Mucosa of descending colon (tissue), 3 donors: ENCODE measurements at regions of chr6 and their contacts with region 1.

Region 1: DNA sequence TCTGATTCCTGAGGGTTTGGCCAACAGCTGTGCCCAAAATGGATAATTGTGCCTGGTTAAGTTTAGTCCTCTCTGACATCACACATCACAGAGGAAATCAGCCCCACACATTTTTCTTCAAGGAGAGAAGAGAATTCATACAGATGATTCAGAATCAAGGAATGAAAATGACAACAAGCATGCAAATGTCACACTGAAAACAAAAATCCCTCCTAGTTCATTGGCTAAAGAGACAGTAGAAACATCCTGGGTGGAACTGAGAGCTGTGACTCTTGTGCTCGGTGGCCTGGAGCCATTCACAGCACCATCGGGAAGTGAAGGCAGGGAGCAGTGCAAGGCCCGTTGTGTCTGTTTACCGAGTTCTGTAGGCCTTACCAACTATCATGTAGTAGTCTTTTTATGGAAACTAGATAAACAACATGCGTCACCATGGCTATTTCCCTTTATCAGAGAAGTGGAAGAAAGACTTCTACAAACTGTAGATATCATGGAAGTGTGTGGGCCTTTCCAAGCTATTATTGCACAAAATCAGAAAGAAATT is 81.7 kb upstream of the TENT5A start:
- DNase-seq: peak; percentile 53 to 57 (median 55)
- ATAC-seq: peak; percentile 78
- H3K4me3 ChIP-seq: no peak overlapping the region
- H3K4me1 ChIP-seq: peaks cover 34% of the 10 kb centered on the region
- CTCF ChIP-seq: no peak

Region 2: GRCh38 chr6:81787313-81788068 is 46.7 kb before region 1 on chr6:
- intact Hi-C with region 1: loop called in 1 of 2 experiments (anchors 10 kb)
- DNase-seq: no peak
- ATAC-seq: peak; percentile 46
- H3K4me3 ChIP-seq: no peak overlapping the region
- H3K4me1 ChIP-seq: peaks cover 12% of the 10 kb centered on the region
- CTCF ChIP-seq: no peak

Region 3: DNA sequence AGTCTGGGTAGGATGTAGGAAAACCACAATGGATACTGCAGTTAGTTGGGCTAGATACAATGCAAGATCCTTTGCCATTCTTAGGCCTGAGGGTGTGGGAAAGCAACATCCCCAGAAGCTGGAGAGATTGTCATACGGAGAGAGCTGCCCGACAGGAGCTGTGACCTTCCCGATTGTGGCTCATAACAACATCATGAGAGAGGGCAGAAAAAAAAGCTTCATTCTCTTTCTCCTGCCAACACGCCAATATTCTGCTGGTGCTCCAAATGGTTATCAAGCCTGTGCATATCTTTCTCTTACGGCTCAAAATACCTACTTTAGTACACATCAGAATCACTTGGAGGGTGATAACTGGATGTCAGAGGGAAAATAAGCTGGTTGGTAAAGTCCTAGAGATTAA is 332.3 kb after region 1 on chr6:
- intact Hi-C with region 1: no loop called
- DNase-seq: no peak
- ATAC-seq: no peak
- H3K4me3 ChIP-seq: no peak overlapping the region
- H3K4me1 ChIP-seq: no peaks in the 10 kb centered on the region
- CTCF ChIP-seq: no peak